GM10248 (cell line): ENCODE measurements at regions of chr9 and their contacts with region 1.

Region 1: DNA sequence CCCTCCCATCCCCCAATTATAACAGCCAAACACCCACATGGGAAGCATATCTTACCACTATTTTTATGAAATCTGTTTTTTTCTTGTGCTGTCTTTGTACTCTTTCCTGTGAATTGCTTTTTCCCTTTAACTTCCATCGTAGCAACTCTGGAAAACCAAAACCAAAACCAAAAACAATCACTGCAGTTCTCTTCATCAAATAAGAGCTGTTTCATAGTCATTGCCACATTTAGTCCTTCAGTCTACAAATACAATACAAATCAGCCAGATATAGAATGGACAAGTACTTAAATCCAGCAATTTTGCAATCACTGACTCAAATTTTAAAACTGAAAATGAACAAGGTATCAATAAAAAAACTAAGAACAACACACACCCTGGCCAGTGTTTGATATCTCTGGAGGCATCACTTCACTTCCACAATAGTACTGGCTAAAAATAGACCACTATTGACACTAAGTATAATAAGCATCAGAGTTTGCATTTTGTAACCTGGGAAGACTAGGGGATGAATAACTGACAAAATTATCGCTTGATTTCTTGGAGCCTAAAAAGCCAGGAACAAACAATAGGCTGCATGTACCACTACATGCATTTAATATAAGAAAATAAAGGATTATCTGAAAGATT is 5.4 kb downstream of the PUM3 start:
- DNase-seq: no peak
- CTCF ChIP-seq: no peak

Region 2: GRCh38 chr9:2800393-2801179 is 37.9 kb before region 1 on chr9:
- CTCF ChIA-PET with region 1: no interaction called
- POLR2A ChIA-PET with region 1: interaction called, 13 read pairs
- DNase-seq: no peak
- CTCF ChIP-seq: no peak